ENCODE measurements at regions of chr5 and their contacts with region 1.

Region 1: DNA sequence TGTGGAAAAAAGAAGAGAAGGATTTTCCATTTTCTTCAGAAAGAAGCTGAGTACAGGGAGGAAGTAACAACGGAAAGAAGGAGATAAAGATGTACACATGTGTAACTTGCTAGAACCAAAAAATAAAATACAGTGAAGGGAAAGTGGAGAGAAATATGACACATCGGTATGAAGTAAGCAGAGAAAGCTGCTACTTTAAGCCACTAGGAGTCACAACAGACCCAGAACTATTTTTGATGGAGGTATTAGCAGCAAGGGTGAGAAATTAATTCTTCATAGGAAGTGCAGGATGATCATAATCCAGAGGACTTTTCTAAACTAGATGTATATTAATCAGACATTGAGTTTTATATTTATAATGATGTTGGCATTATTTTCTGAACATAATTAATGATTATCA is 88.5 kb downstream of the FAM174A start:
- DNase-seq: no peak
- ATAC-seq: no peak

Region 2: DNA sequence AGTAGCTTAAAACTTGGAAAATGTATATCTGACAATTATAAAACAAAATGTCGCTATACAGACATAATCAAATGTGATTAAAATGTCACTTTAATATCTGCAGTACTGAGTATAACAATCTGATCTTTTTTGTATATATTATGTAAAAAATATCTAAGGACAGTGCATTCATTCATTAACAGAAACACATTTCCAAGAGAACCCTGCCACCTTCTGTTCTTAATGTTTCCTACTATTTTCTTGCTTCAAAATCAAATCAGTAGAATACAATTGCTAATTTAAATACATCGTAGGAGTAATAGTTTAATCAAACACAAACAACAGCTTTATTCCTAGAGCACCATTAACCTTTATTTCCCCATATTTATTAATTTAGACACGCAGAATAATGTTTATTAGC is 422.0 kb after region 1 on chr5:
- intact Hi-C with region 1: loop called (anchors 5 kb)
- DNase-seq: no peak
- ATAC-seq: no peak